T-cell (primary cell): ENCODE measurements at regions of chr3 and their contacts with region 1.

Region 1: DNA sequence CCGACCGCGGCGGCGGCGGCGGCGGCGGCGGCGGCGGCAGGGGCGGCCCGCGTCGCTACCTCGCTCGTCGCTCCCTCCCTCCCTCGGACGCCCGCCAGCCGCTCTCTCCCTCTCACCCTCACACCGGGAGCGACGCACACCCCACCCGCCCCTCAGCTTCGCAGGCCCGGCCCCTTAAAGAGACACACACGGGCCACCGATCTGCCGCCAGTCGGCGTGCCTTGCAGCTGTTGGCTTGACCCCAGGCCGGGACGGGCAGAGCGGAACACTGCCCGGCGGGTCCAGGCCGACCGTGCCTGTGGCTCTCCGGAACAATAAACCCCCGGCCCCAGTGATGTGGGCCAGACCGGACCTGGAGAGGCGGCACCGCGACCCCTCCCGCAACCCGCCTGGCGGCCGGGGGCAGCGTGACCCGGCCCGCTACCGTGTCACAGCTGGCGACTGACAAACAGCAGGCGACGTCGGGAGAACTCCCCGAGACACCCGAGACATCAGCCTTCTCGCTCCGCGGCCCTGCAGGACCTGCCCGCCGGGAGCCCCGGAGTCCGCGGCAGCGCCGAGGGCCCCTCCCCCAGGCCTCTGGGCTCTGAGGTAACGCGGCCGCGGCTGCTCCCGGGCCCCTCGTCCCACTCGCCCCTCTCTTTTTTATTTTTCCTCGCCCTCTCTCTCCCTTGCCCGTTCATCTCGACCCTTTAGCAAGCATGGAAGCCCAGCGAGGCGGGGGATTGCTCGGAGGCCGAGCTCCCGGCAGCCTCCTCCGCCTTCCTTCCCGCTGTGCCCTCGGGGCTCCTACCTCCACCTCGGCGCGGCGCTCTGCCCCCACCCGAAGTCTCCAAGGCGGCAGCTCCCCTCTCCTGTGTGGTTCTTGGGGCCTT is at the start of gene SETD2:
- DNase-seq: peak; percentile 70 to 89 (median 81)
- ATAC-seq: peak; percentile 88 to 89 (median 88)
- H3K4me3 ChIP-seq: peak within 1 kb of the TSS; percentile 94 to 95
- H3K4me3 Mint-ChIP-seq: peak within 1 kb of the TSS; percentile 90 to 98 (median 98)
- H3K27ac ChIP-seq: peak within 1 kb of the TSS; percentile 84
- H3K27ac Mint-ChIP-seq: peak within 1 kb of the TSS; percentile 96 to 98
- H3K4me1 ChIP-seq: peaks cover 21 to 41% of the 10 kb centered on the region in 2 experiments
- H3K4me1 Mint-ChIP-seq: peaks cover 55 to 56% (median 56%) of the 10 kb centered on the region in 3 donors
- H3K27me3 ChIP-seq: no peaks in the 10 kb centered on the region
- H3K27me3 Mint-ChIP-seq: no peaks in the 10 kb centered on the region
- total RNA-seq, gene SETD2: 58.1 to 84.6 (median 63.9) TPM

Region 2: DNA sequence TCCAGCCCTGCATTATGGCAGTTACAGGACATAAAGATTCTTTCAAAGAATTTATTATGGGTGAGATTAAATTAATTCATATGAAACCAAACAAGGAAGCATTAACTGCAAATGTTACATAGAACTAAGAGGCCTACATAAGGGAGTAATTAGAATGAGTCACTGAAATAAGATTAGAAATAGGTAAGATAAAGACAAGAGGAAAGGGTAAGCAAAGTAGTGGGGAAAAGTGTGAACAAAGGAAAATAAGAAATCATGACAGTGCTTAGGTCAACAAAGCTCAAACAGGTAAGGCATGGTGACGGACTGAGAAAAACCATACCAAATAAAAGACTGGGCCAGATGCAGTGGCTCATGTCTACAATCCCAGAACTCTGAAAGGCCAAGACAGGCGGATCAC is 74.6 kb before region 1 on chr3:
- CTCF ChIA-PET with region 1: no interaction called
- POLR2A ChIA-PET with region 1: interaction called in 1 of 2 experiments, 17 read pairs
- DNase-seq: no peak
- ATAC-seq: no peak
- H3K4me3 ChIP-seq: no peak overlapping the region
- H3K4me3 Mint-ChIP-seq: no peak overlapping the region
- H3K27ac ChIP-seq: no peak overlapping the region
- H3K27ac Mint-ChIP-seq: no peak overlapping the region
- H3K4me1 ChIP-seq: no peaks in the 10 kb centered on the region
- H3K4me1 Mint-ChIP-seq: peaks cover 5 to 6% (median 6%) of the 10 kb centered on the region in 3 donors
- H3K27me3 ChIP-seq: no peaks in the 10 kb centered on the region
- H3K27me3 Mint-ChIP-seq: no peaks in the 10 kb centered on the region

Region 3: GRCh38 chr3:47324278-47324865 is 160.1 kb after region 1 on chr3:
- CTCF ChIA-PET with region 1: interaction called in 1 of 2 experiments, 4 read pairs
- POLR2A ChIA-PET with region 1: interaction called in 1 of 2 experiments, 18 read pairs
- DNase-seq: peak in 32 of 35 experiments; percentile 5 to 72 (median 30)
- ATAC-seq: peak; percentile 48 to 67 (median 64)
- H3K4me3 ChIP-seq: no peak overlapping the region
- H3K4me3 Mint-ChIP-seq: no peak overlapping the region
- H3K27ac ChIP-seq: no peak overlapping the region
- H3K27ac Mint-ChIP-seq: no peak overlapping the region
- H3K4me1 ChIP-seq: no peaks in the 10 kb centered on the region
- H3K4me1 Mint-ChIP-seq: peaks cover 2 to 8% (median 2%) of the 10 kb centered on the region in 3 donors
- H3K27me3 ChIP-seq: no peaks in the 10 kb centered on the region
- H3K27me3 Mint-ChIP-seq: no peaks in the 10 kb centered on the region